Breast epithelium (tissue), 4 donors: ENCODE measurements at regions of chr9 and their contacts with region 1.

Region 1: DNA sequence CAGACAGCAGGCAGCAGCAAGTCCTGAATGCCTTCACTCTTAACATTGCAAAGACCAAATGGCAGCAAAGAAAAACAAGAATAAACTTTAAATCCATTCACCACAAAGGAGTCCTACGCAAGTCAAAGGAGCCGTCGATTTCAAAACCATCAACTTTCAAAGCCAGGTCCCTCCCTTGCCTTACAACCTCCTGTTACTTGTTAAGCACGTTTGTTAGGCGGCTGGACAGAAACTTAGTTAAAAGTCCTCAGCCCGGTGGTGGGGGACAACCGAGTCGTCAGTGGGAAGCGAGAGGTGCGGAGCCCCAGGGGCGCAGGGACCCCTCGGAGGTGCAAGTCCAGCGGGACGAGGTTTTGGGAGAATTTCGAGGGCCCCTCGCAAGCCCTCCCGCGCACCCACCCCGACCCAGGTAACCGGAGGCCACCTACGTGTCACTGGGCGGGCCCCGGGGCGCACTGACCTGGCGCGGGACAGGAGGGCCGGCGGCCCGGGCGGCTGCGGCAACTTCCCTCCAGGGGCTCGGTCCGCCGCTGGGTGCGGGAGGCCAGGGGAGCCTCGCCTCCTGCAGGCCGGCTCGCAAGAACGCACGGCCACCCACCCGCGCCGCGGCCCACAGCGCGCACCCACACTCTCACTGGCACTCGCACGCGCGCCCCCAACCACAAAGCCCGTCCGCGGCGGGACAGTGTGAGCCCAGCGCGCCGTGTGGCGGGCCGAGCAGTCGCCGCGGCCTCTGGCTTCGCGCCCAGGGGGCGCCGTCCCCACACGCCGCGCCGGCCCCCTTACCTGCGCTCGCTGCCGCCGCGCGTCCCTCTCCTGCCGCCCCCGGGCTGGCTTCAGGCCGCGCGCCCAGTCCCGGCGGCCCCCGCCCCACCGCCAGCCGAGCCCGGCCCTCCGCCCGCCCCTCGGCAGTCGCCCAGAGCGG is 627 bp downstream of the LPAR1 start:
- DNase-seq: peak in 1 of 2 donors; percentile 55
- H3K4me3 ChIP-seq: peak overlapping the region; percentile 77 to 92 (median 90)
- H3K27ac ChIP-seq: peak overlapping the region; percentile 81 to 98
- H3K4me1 ChIP-seq: peaks cover 0 to 14% of the 10 kb centered on the region in 2 donors
- H3K27me3 ChIP-seq: no peaks in the 10 kb centered on the region
- CTCF ChIP-seq: peak in 1 of 3 donors; percentile 23
- POLR2A ChIP-seq: no peak

Region 2: GRCh38 chr9:110410961-110411360 is 626.7 kb before region 1 on chr9:
- intact Hi-C with region 1: loop called (anchors 5 kb)
- DNase-seq: no peak
- H3K4me3 ChIP-seq: no peak overlapping the region
- H3K27ac ChIP-seq: no peak overlapping the region
- H3K4me1 ChIP-seq: no peaks in the 10 kb centered on the region
- H3K27me3 ChIP-seq: no peaks in the 10 kb centered on the region
- CTCF ChIP-seq: no peak
- POLR2A ChIP-seq: no peak

Region 3: GRCh38 chr9:110886832-110887231 is 150.8 kb before region 1 on chr9:
- intact Hi-C with region 1: loop called (anchors 5 kb)
- DNase-seq: no peak
- H3K4me3 ChIP-seq: no peak overlapping the region
- H3K27ac ChIP-seq: no peak overlapping the region
- H3K4me1 ChIP-seq: no peaks in the 10 kb centered on the region
- H3K27me3 ChIP-seq: no peaks in the 10 kb centered on the region
- CTCF ChIP-seq: no peak
- POLR2A ChIP-seq: no peak

Region 4: DNA sequence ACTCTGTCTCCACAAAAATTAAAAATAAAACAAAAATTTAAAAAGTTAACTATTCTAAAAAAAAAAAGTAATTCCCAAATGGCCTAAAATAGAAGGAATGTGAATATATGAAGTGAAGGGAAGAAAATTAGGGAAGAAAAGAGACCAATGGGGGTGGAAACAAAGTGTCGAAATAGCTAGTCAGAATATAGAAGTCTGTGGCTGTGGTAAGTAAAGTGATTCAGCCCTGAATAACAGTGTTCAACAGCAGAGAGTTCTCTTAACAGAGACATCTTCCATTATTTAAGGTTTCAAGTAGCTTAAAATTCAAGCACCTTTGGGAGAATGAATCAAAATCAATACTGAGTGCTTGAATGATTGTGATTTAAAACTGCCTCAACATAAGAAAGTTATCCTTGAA is 51.1 kb before region 1 on chr9:
- intact Hi-C with region 1: no loop called
- DNase-seq: no peak
- H3K4me3 ChIP-seq: no peak overlapping the region
- H3K27ac ChIP-seq: no peak overlapping the region
- H3K4me1 ChIP-seq: no peaks in the 10 kb centered on the region
- H3K27me3 ChIP-seq: no peaks in the 10 kb centered on the region
- CTCF ChIP-seq: no peak
- POLR2A ChIP-seq: no peak

Region 5: DNA sequence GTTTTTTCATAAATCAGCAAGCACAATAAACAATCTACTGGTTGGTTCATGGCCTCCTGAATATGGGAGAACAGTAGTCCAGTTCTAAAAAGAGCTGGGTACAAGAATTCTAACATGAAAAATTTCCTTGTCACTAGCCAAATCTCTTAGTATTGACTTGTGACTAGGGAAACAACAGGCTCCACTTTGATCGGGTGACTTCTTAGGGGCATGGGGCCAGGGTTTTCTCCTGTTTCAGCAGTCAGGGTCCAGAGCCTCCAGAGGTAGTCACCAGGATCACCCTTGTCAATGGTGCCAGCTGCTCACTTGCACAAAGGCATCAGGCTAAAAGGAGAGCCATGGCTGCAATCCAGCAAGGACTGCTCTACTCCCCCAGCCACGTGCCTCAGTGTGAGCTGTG is 37.4 kb before region 1 on chr9:
- intact Hi-C with region 1: no loop called
- DNase-seq: no peak
- H3K4me3 ChIP-seq: no peak overlapping the region
- H3K27ac ChIP-seq: no peak overlapping the region
- H3K4me1 ChIP-seq: no peaks in the 10 kb centered on the region
- H3K27me3 ChIP-seq: no peaks in the 10 kb centered on the region
- CTCF ChIP-seq: no peak
- POLR2A ChIP-seq: no peak